Panc1 (cell line): ENCODE measurements at regions of chr16 and their contacts with region 1.

Region 1: DNA sequence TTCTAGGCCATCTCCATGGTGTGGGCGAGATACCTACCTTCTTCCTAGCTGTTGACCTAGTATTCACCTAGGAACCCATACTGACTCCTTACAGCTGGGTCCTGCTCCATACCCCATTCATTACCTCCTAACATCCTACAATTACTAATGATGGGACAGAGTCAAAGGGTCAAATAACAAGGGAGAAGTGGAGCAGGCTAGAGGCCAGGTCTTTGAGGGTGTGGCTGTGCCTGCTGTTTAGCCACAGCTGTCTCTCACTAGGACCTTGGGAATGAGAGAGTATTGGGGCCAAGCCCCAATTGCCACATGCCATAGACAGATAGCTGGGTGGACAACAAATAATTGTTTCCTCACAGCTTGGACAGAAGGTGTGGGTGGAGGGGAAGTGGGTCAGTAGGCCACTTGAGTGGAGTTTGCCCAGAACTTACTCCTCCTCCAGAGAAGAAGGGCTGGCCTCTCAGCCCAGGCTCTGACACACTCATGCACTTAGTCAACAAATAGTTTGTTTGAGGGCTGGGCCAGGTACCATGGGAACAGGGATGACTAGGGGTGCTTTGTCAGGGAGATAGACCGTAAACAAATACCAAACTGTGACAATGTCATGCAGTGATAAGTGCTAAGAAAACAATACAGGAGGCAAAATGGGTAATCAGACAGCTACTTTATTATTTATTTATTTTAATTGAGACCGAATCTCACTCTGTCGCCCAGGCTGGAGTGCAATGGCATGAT is 10.2 kb upstream of the CENPT start:
- DNase-seq: peak; percentile 78
- ATAC-seq: peak; percentile 86
- H3K4me3 ChIP-seq: no peak overlapping the region
- H3K27ac ChIP-seq: no peak overlapping the region
- H3K4me1 ChIP-seq: peaks cover 15% of the 10 kb centered on the region
- H3K27me3 ChIP-seq: no peaks in the 10 kb centered on the region
- CTCF ChIP-seq: no peak

Region 2: GRCh38 chr16:67796099-67796718 is 61.5 kb before region 1 on chr16:
- CTCF ChIA-PET with region 1: no interaction called
- POLR2A ChIA-PET with region 1: no interaction called
- in situ Hi-C with region 1: no loop called
- intact Hi-C with region 1: no loop called
- DNase-seq: no peak
- ATAC-seq: no peak
- H3K4me3 ChIP-seq: no peak overlapping the region
- H3K27ac ChIP-seq: no peak overlapping the region
- H3K4me1 ChIP-seq: no peaks in the 10 kb centered on the region
- H3K27me3 ChIP-seq: no peaks in the 10 kb centered on the region
- CTCF ChIP-seq: no peak

Region 3: DNA sequence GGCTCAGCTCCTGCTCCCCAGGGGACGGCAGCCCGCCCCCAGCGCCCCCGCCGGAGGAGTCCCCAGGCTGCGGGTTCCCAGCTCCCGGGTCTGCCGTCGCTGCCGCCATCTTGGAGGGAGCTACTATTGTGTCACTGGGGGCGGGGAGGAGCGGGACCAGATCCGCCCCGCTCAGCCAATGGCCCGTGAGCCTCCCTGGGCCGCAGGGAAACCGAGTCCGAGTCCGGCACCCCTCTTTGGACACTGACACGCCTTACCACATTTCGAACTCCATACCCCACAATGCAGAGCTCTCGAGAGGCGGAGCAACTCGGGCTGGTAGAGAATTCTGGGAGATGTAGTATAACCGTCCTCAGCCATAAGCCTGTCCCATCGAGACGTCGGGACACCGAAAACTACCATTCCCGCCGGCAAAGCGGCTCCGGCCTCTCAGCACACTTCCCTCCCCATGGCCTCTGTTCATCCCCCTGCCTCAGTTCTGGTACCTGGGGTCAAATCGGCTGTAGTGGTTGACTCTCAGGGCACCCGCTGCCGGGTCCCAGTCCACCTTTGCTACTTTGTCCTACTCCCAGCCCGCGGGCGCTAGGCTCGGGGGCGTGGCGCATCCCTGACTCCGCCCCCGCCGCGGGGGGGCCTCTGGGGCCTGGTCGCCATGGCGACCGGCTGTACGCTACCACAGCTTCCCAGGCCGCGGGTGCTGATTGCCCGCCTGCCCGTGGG is 51.1 kb before region 1 on chr16 and contains the starts of genes RANBP10 and TSNAXIP1:
- CTCF ChIA-PET with region 1: no interaction called
- POLR2A ChIA-PET with region 1: interaction called, 13 read pairs
- in situ Hi-C with region 1: no loop called
- intact Hi-C with region 1: no loop called
- DNase-seq: peak; percentile 95
- ATAC-seq: peak; percentile 98
- H3K4me3 ChIP-seq: peak within 1 kb of the TSS; percentile 92 to 96
- H3K27ac ChIP-seq: peak within 1 kb of the TSS; percentile 85
- H3K4me1 ChIP-seq: peaks cover 9% of the 10 kb centered on the region
- H3K27me3 ChIP-seq: no peaks in the 10 kb centered on the region
- CTCF ChIP-seq: no peak
- total RNA-seq, gene RANBP10: 13.4 TPM
- total RNA-seq, gene TSNAXIP1: 1.6 TPM

Region 4: DNA sequence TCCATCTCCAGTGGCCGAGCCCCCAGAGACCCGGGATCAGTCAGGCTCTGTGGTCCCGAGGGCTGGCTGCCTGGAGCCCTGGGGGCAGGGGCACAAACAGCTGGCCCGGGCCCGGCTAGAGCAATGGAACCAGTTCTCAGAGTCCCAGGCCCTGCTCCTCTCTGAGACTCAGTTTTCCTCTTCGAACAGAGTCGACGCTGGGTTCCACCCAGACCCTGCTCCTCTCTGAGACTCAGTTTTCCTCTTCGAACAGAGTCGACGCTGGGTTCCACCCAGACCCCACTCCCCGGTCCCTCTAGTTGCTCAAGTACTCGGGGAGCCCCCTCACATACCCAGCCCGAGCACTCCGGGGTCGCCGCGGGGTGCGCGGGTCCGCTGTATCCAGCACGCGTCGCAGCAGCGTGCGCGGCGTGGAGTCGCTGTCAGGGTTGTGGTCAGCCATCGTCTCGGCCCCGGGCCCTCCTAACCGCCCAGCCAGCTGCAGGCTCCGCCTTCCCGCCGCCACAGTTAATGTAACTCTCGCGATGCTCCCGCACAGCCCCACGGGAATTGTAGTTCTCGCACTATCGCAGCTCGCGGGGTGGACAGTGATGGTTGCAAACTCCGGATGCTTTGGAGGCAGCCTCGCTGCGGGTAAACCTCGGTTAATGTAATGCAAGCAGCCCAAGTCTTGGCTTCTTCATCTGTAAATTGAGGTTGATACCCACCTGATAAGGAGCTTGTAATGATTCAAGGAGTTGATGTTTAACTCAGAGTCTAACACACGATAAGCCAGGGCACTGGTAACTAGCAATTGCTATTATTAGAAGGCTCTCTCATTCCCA is 24.0 kb before region 1 on chr16:
- CTCF ChIA-PET with region 1: no interaction called
- POLR2A ChIA-PET with region 1: no interaction called
- in situ Hi-C with region 1: no loop called
- intact Hi-C with region 1: no loop called
- DNase-seq: peak; percentile 68
- ATAC-seq: peak; percentile 99
- H3K4me3 ChIP-seq: peak overlapping the region; percentile 81 to 82
- H3K27ac ChIP-seq: peak overlapping the region; percentile 87
- H3K4me1 ChIP-seq: peaks cover 9% of the 10 kb centered on the region; the same call in 1 of the 2 replicates
- H3K27me3 ChIP-seq: no peaks in the 10 kb centered on the region
- CTCF ChIP-seq: no peak

Region 5: GRCh38 chr16:67846320-67847063 is 11.2 kb before region 1 on chr16 and contains the start of gene NUTF2:
- CTCF ChIA-PET with region 1: interaction called, 11 read pairs
- POLR2A ChIA-PET with region 1: no interaction called
- in situ Hi-C with region 1: no loop called
- intact Hi-C with region 1: no loop called
- DNase-seq: no peak
- ATAC-seq: peak; percentile 85
- H3K4me3 ChIP-seq: peak within 1 kb of the TSS; percentile 85 to 92
- H3K27ac ChIP-seq: peak within 1 kb of the TSS; percentile 93
- H3K4me1 ChIP-seq: peaks cover 26% of the 10 kb centered on the region
- H3K27me3 ChIP-seq: no peaks in the 10 kb centered on the region
- CTCF ChIP-seq: no peak
- total RNA-seq, gene NUTF2: 119 TPM